Activated CD4-positive, alpha-beta memory T cell treated with anti-CD3 and anti-CD28 coated beads for 36 hours (primary cell): ENCODE measurements at regions of chr19 and their contacts with region 1.

Region 1: GRCh38 chr19:38849860-38850435 is at the start of gene HNRNPL:
- DNase-seq: peak; percentile 99
- H3K4me3 Mint-ChIP-seq: peak within 1 kb of the TSS; percentile 97
- H3K27ac Mint-ChIP-seq: peak within 1 kb of the TSS; percentile 97
- H3K4me1 Mint-ChIP-seq: peaks cover 41% of the 10 kb centered on the region
- H3K27me3 Mint-ChIP-seq: no peaks in the 10 kb centered on the region
- total RNA-seq, gene HNRNPL: 646 to 671 TPM

Region 2: DNA sequence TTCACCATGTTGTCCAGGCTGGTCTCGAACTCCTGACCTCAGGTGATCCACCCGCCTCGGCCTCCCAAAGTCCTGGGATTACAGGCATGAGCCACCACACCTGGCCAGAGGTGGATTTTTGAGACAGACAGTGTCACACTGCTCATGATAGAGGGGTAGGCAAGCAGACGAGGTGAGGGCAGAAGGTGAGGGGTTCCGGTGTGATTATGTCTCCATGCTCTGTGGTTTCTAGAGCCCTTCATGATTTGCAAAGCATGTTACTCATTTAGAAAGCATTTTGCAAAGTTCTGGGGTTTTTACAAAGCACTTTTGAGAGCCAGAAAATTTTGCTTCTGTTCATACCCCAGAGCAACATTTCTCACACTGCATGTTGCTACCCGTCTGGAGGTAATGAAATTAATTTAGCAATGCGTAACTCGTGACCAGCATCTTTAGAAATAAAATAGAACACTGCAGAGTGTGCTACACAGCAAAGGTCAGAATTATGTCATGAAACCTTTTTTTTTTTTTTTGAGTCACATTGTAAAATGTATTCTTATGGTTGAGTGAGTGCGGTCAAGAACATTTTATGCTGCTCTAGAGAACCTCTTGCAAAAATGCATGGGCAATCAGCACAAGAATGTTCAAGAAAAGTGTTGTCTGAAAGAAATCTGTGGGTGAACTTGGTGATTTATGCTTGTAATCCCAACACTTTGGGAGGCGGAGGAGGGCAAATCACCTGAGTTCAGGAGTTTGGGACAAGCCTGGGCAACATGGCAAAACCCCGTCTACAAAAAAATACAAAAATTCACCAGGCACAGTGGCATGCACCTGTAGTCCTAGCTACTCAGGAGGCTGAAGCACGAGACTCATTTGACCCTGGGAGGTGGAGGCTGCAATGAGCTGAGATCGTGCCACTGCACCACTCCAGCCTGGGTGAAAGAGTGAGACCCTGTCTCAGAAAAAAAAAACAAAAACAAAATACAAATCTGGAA is 290.2 kb before region 1 on chr19:
- CTCF ChIA-PET with region 1: no interaction called
- POLR2A ChIA-PET with region 1: no interaction called
- intact Hi-C with region 1: loop called (anchors 5 kb)
- DNase-seq: peak; percentile 77
- H3K4me3 Mint-ChIP-seq: peak overlapping the region; percentile 49
- H3K27ac Mint-ChIP-seq: peak overlapping the region; percentile 88
- H3K4me1 Mint-ChIP-seq: peaks cover 58% of the 10 kb centered on the region
- H3K27me3 Mint-ChIP-seq: peaks cover 3% of the 10 kb centered on the region

Region 3: GRCh38 chr19:38838573-38839269 is 11.2 kb before region 1 on chr19:
- CTCF ChIA-PET with region 1: interaction called, 3 read pairs
- POLR2A ChIA-PET with region 1: interaction called, 11 read pairs
- intact Hi-C with region 1: loop called (anchors 1 kb)
- DNase-seq: peak; percentile 87
- H3K4me3 Mint-ChIP-seq: no peak overlapping the region
- H3K27ac Mint-ChIP-seq: peak overlapping the region; percentile 82
- H3K4me1 Mint-ChIP-seq: peaks cover 63% of the 10 kb centered on the region
- H3K27me3 Mint-ChIP-seq: no peaks in the 10 kb centered on the region

Region 4: DNA sequence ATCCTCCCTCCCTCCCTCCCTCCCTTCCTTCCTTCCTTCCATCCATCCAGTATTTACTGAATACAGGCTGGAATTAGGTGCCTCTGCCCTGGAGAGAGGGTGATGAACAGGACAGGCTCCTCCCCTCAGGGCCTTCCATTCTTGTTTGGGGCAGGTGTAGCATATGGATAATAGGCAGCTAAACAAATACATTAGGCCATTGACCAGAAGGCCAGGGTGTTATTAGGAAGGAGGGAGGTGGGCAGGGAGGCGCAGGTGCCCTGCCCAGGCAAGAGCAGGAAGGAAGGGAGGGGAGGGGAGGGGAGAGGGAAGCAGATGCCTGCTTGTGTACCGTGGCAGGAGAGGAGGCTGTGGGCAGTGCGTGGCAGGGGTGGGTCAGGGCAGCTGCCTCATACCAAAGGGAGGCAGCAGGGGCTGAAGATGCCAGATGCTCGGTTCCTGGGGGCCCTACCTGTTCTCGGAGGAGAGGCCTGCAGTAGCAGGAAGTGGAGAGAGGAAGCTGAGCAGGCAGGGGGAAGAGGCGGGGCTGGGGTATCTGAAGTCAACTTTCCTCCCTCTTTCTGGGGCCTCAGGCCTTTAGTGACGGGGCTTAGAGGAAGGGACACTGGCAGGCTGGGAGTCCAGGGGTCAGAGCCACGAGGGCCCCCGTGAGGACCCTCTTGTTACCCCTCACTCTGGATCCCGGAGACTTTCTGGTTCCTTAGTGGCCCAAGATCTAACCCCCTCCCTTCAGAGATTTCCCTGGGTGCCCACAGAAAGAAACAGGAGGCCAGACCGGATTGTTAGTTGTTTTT is 28.0 kb after region 1 on chr19 and contains the start of gene RINL:
- CTCF ChIA-PET with region 1: no interaction called
- POLR2A ChIA-PET with region 1: interaction called, 10 read pairs
- intact Hi-C with region 1: no loop called
- DNase-seq: peak; percentile 84
- H3K4me3 Mint-ChIP-seq: peak within 1 kb of the TSS; percentile 98
- H3K27ac Mint-ChIP-seq: peak within 1 kb of the TSS; percentile 99
- H3K4me1 Mint-ChIP-seq: peaks cover 33% of the 10 kb centered on the region
- H3K27me3 Mint-ChIP-seq: no peaks in the 10 kb centered on the region
- total RNA-seq, gene RINL: 92.6 to 100.0 TPM

Region 5: DNA sequence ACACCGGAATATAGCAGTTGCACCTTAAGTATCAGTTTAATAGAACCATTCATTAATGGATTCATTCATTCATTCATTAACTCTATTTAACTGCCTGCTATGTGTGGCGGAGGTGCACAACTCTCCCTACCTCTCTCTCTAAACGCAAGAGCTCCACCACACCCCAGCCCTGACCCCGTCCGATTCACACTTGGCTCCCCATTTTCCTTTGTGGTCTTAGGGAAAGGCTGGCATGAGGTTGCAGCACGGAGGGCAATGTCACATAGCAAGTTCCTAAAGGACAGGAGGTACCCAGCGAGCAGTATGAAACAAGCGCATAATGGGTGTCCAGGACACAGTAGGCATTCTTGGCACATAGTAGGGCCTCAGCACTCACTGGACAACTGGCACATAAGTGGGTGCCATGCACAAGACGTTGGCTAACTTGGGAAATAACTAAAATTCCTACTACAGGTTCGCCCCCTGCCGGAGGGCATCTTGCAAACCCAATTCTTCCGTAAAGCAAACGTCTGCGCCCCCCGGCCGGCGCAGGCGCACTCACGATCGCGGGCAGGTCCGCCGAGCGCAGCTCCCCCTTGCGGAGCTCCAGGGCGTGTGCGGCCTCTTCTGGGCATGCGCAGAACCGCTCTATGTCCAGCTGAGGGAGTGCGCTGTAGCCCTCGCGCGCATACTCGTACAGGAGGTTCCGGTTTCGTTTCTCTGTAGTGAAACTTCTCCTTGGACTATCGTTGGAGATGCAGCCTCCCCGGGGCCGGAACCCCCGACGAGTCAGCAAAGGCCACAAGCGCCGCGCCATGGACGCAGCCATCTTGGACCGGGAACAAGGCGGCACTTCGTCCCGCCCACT is 80.2 kb after region 1 on chr19 and contains the start of gene SARS2:
- CTCF ChIA-PET with region 1: interaction called, 12 read pairs
- POLR2A ChIA-PET with region 1: interaction called, 5 read pairs
- intact Hi-C with region 1: loop called (anchors 1 kb)
- DNase-seq: peak; percentile 95
- H3K4me3 Mint-ChIP-seq: peak within 1 kb of the TSS; percentile 94
- H3K27ac Mint-ChIP-seq: peak within 1 kb of the TSS; percentile 96
- H3K4me1 Mint-ChIP-seq: peaks cover 34% of the 10 kb centered on the region
- H3K27me3 Mint-ChIP-seq: no peaks in the 10 kb centered on the region
- total RNA-seq, gene SARS2: 33.7 to 39.6 TPM